WTC11 (cell line): ENCODE measurements at regions of chr3 and their contacts with region 1.

Region 1: DNA sequence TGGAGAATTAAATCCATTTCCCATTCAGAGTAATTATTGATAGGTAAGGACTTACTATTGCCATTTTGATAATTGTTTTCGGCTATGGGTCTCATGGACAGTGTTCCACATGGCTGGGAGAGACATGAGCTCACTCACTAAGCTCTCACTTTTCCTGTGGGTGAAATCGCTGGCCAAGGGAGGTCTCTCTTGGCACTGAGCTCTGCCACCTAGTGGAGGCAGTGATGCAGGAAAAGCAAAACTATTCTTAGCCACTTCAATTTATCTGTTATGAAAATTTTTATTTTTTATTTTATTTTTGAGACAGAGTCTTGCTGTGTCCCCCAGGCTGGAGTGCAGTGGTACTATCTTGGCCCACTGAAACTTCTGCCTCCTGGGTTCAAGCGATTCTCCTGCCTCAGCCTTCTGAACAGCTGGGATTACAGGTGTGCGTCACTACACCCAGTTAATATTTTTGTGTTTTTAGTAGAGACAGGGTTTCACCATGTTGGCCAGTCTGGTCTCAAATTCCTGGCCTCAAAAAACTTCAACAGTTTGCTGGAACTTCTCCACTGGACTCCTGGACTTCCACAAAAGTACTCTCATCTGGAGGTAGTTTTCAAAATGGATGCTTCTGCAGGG is 4.7 kb upstream of the RNF13 start:
- DNase-seq: peak; percentile 57
- ATAC-seq: peak; percentile 6; the same call in 1 of the 2 replicates
- H3K4me3 Mint-ChIP-seq: no peak overlapping the region
- H3K27ac Mint-ChIP-seq: no peak overlapping the region
- H3K4me1 Mint-ChIP-seq: peaks cover 7% of the 10 kb centered on the region
- H3K27me3 Mint-ChIP-seq: peaks cover 4% of the 10 kb centered on the region; the same call in 1 of the 2 replicates
- CTCF ChIP-seq: peak; percentile 56; the same call in 1 of the 2 replicates

Region 2: DNA sequence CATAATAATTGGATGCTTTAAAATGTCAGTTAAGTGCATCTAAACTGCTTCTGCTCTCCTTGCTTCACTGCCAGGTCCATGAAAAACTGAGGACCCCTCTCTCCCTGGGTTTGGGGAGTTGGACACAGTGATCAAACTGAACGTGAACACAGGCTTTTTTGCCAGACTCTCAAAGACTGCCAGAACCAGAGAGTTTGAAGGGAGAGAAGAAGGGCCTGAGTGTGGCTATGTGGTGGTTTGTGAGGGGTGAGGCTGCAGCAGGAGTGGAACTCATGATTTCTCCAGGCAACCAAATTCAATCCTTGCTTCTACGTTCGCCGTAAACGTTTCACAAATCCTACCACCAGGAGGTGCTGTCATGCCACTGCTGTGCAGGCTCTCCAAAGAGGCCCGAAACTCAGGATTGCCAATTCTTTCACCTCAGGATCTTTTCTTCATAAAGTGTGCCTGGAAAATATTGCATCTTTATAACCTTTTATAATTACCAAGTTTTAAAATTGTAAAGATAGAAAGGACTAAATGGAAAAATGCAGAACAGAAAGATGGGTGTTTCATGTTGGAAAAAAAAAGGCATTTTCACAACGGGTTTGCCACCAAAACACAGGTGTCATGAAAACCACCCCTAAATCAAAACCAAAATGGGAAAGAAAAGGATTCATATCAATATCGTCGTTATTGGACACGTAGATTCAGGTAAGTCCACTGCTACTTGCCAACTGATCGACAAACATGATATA is 314.1 kb before region 1 on chr3:
- CTCF ChIA-PET with region 1: interaction called, 15 read pairs
- POLR2A ChIA-PET with region 1: no interaction called
- DNase-seq: peak; percentile 82
- ATAC-seq: peak; percentile 87
- H3K4me3 Mint-ChIP-seq: no peak overlapping the region
- H3K27ac Mint-ChIP-seq: no peak overlapping the region
- H3K4me1 Mint-ChIP-seq: peaks cover 7% of the 10 kb centered on the region; the same call in 1 of the 2 replicates
- H3K27me3 Mint-ChIP-seq: no peaks in the 10 kb centered on the region; the same call in 1 of the 2 replicates
- CTCF ChIP-seq: peak; percentile 64; the same call in 1 of the 2 replicates

Region 3: GRCh38 chr3:149723781-149724180 is 84.5 kb before region 1 on chr3:
- CTCF ChIA-PET with region 1: no interaction called
- POLR2A ChIA-PET with region 1: no interaction called
- DNase-seq: no peak
- ATAC-seq: no peak
- H3K4me3 Mint-ChIP-seq: no peak overlapping the region
- H3K27ac Mint-ChIP-seq: no peak overlapping the region
- H3K4me1 Mint-ChIP-seq: no peaks in the 10 kb centered on the region
- H3K27me3 Mint-ChIP-seq: no peaks in the 10 kb centered on the region
- CTCF ChIP-seq: no peak

Region 4: GRCh38 chr3:149752051-149752787 is 56.1 kb before region 1 on chr3 and contains the start of gene COMMD2:
- CTCF ChIA-PET with region 1: interaction called, 21 read pairs
- POLR2A ChIA-PET with region 1: no interaction called
- DNase-seq: peak; percentile 72
- ATAC-seq: peak; percentile 99
- H3K4me3 Mint-ChIP-seq: peak within 1 kb of the TSS; percentile 97
- H3K27ac Mint-ChIP-seq: peak within 1 kb of the TSS; percentile 93
- H3K4me1 Mint-ChIP-seq: 0 out of 2 replicates have a peak, but pooled peaks cover 4% of the 10 kb centered on the region
- H3K27me3 Mint-ChIP-seq: peaks cover 3% of the 10 kb centered on the region; the same call in 1 of the 2 replicates
- CTCF ChIP-seq: no peak
- total RNA-seq, gene COMMD2: 51.3 to 52.9 TPM (median 52.1 TPM) in 3 replicates

Region 5: GRCh38 chr3:149781211-149781610 is 27.1 kb before region 1 on chr3:
- CTCF ChIA-PET with region 1: interaction called, 20 read pairs
- POLR2A ChIA-PET with region 1: no interaction called
- DNase-seq: no peak
- ATAC-seq: no peak
- H3K4me3 Mint-ChIP-seq: no peak overlapping the region
- H3K27ac Mint-ChIP-seq: no peak overlapping the region
- H3K4me1 Mint-ChIP-seq: peaks cover 4% of the 10 kb centered on the region; the same call in 1 of the 2 replicates
- H3K27me3 Mint-ChIP-seq: no peaks in the 10 kb centered on the region; the same call in 1 of the 2 replicates
- CTCF ChIP-seq: no peak

Region 6: DNA sequence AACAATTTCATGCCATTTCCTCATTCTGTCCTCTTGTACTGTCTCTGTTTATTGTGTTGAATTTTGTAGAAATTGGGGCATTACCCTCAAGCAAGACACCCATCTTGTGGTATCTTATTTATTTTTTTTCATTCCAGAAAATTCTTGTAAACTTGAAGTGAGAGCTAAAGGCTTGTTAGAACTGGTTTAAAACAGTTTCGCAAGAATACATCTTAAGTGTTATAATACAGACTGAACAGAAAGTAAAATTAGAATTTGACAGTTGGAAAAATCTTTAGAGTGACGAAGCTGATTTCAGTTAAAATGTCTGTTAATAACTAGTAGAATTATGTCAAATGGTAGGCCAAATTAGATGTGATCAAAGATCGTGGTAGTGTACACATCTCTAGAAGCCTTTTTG is 31.6 kb after region 1 on chr3:
- CTCF ChIA-PET with region 1: interaction called, 11 read pairs
- POLR2A ChIA-PET with region 1: no interaction called
- DNase-seq: no peak
- ATAC-seq: no peak
- H3K4me3 Mint-ChIP-seq: no peak overlapping the region
- H3K27ac Mint-ChIP-seq: no peak overlapping the region
- H3K4me1 Mint-ChIP-seq: no peaks in the 10 kb centered on the region
- H3K27me3 Mint-ChIP-seq: no peaks in the 10 kb centered on the region
- CTCF ChIP-seq: no peak